IMR-90 (cell line): ENCODE measurements at regions of chr10 and their contacts with region 1.

Region 1: GRCh38 chr10:80144067-80144695 is 11.7 kb downstream of the PLAC9 start:
- DNase-seq: no peak
- ATAC-seq: peak; percentile 40
- H3K4me3 ChIP-seq: no peak overlapping the region
- H3K27ac ChIP-seq: no peak overlapping the region
- H3K4me1 ChIP-seq: no peaks in the 10 kb centered on the region
- H3K27me3 ChIP-seq: no peaks in the 10 kb centered on the region
- CTCF ChIP-seq: no peak
- POLR2A ChIP-seq: no peak
- RAD21 ChIP-seq: no peak

Region 2: DNA sequence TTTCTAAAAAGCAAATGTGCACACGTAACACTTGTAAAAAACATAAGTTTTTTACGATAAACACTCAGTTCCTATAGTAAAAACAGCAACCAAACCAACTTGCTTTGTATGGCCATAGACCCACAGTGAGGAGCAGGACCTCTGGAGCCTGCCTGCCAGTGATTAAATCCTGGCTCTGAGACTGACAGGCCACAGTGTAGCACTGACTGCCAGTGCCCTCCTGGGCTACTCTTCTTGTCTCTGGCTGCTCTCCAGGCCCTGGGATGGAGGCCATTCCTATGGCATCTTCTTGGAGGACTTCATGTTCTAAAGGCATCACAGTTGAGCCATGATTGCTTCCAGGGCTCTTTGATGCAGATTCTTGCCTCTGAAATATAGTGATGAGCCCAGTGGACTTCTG is 88.4 kb before region 1 on chr10:
- CTCF ChIA-PET with region 1: interaction called, 7 read pairs
- POLR2A ChIA-PET with region 1: no interaction called
- dilution Hi-C with region 1: no loop called
- in situ Hi-C with region 1: no loop called
- intact Hi-C with region 1: loop called (anchors 5 kb)
- DNase-seq: no peak
- ATAC-seq: no peak
- H3K4me3 ChIP-seq: no peak overlapping the region
- H3K27ac ChIP-seq: no peak overlapping the region
- H3K4me1 ChIP-seq: no peaks in the 10 kb centered on the region
- H3K27me3 ChIP-seq: peaks cover 1% of the 10 kb centered on the region; the same call in 1 of the 2 replicates
- CTCF ChIP-seq: no peak
- POLR2A ChIP-seq: no peak
- RAD21 ChIP-seq: no peak

Region 3: GRCh38 chr10:80569131-80569895 is 425.1 kb after region 1 on chr10:
- CTCF ChIA-PET with region 1: no interaction called
- POLR2A ChIA-PET with region 1: no interaction called
- dilution Hi-C with region 1: no loop called
- in situ Hi-C with region 1: no loop called
- intact Hi-C with region 1: no loop called
- DNase-seq: no peak
- ATAC-seq: no peak
- H3K4me3 ChIP-seq: no peak overlapping the region
- H3K27ac ChIP-seq: no peak overlapping the region
- H3K4me1 ChIP-seq: no peaks in the 10 kb centered on the region
- H3K27me3 ChIP-seq: no peaks in the 10 kb centered on the region; the same call in 1 of the 2 replicates
- CTCF ChIP-seq: no peak
- POLR2A ChIP-seq: no peak
- RAD21 ChIP-seq: no peak